ENCODE measurements at regions of chr20 and their contacts with region 1.

Region 1: GRCh38 chr20:63973636-63974402 is 4.1 kb upstream of the ZNF512B start:
- DNase-seq: peak; percentile 76
- H3K4me3 Mint-ChIP-seq: peak overlapping the region; percentile 61
- H3K27ac Mint-ChIP-seq: no peak overlapping the region
- H3K4me1 Mint-ChIP-seq: peaks cover 31% of the 10 kb centered on the region
- H3K27me3 Mint-ChIP-seq: no peaks in the 10 kb centered on the region
- CTCF ChIP-seq: peak; percentile 98

Region 2: GRCh38 chr20:63785691-63786131 is 188.1 kb before region 1 on chr20:
- CTCF ChIA-PET with region 1: no interaction called
- POLR2A ChIA-PET with region 1: no interaction called
- intact Hi-C with region 1: loop called (anchors 5 kb)
- DNase-seq: no peak
- H3K4me3 Mint-ChIP-seq: no peak overlapping the region
- H3K27ac Mint-ChIP-seq: no peak overlapping the region
- H3K4me1 Mint-ChIP-seq: no peaks in the 10 kb centered on the region
- H3K27me3 Mint-ChIP-seq: no peaks in the 10 kb centered on the region
- CTCF ChIP-seq: no peak

Region 3: GRCh38 chr20:63937596-63937995 is 36.2 kb before region 1 on chr20:
- CTCF ChIA-PET with region 1: interaction called, 11 read pairs
- POLR2A ChIA-PET with region 1: no interaction called
- intact Hi-C with region 1: no loop called
- DNase-seq: no peak
- H3K4me3 Mint-ChIP-seq: no peak overlapping the region
- H3K27ac Mint-ChIP-seq: no peak overlapping the region
- H3K4me1 Mint-ChIP-seq: no peaks in the 10 kb centered on the region
- H3K27me3 Mint-ChIP-seq: no peaks in the 10 kb centered on the region
- CTCF ChIP-seq: no peak

Region 4: GRCh38 chr20:63955827-63956663 is 17.8 kb before region 1 on chr20 and contains the start of gene UCKL1:
- CTCF ChIA-PET with region 1: interaction called, 12 read pairs
- POLR2A ChIA-PET with region 1: interaction called, 26 read pairs
- intact Hi-C with region 1: no loop called
- DNase-seq: peak; percentile 81
- H3K4me3 Mint-ChIP-seq: peak within 1 kb of the TSS; percentile 74
- H3K27ac Mint-ChIP-seq: no peak within 1 kb of the TSS
- H3K4me1 Mint-ChIP-seq: peaks cover 21% of the 10 kb centered on the region
- H3K27me3 Mint-ChIP-seq: no peaks in the 10 kb centered on the region
- CTCF ChIP-seq: no peak
- total RNA-seq, gene UCKL1: 38.6 and 43.7 TPM in 2 replicates

Measured in MCF 10A (cell line).